ENCODE measurements at regions of chr13 and their contacts with region 1.

Region 1: DNA sequence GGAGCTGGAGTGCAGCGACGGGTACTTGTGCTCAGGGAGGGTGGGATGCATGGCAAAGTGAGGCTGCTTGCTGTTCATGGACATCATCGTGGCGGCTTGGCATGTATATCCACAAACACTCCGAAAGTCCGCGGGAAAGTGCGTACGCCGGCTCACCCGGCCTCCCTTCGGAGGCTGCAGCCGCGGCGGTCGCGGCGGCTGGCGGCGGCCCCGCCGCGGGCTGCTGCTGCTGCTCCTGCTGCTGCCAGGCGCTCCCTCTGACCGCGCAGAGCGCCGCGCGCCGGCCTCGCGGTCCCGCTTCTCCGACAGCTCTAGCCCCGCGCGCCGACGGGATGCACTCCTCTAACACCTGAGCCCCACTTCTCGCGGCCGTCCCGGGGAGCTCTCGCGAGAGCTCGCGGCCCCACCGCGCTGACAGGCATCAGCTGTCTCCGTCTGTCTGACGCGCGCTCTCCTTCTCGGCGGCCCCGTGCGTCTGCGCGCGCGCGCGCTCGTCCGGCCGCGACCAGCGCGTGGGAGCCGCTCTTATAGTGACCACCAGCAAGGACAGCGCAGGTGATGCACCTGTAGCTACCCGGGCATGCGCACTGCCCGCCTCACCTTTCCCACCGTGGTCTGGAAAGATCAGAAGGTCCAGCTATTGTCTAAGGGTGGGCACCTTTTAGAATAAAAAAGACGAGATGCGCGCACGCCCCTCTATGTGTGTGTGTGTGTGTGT is at the start of gene POU4F1:
- DNase-seq: peak; percentile 71
- H3K4me3 ChIP-seq: peak within 1 kb of the TSS; percentile 11 to 39 (median 33)
- H3K27ac ChIP-seq: no peak within 1 kb of the TSS
- H3K4me1 ChIP-seq: peaks cover 3% of the 10 kb centered on the region
- H3K27me3 ChIP-seq: peaks cover 73 to 90% of the 10 kb centered on the region in 2 experiments
- CTCF ChIP-seq: no peak
- POLR2A ChIP-seq: no peak
- total RNA-seq, gene POU4F1: 0.39 and 1.1 TPM in 2 replicates

Region 2: DNA sequence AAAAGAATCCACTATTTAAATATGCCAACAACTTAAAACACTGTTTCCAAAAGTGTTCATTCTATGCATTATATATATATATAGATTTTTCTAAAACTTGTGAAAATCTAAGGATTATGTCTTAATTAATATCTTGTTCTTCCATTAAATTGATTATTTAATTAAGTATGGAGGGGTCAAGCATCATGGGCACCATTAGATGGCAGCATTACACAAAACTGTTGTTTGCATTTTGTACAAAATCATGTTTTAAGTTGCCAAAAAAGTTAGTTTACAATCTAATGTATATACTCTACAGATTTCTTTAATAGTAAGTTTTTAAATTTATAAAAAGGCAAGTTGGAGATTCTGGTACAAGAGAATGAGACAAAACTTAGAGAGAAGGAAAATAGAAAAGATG is 471.6 kb before region 1 on chr13:
- CTCF ChIA-PET with region 1: no interaction called
- POLR2A ChIA-PET with region 1: no interaction called
- dilution Hi-C with region 1: no loop called
- intact Hi-C with region 1: loop called (anchors 5 kb)
- DNase-seq: peak; percentile 39
- H3K4me3 ChIP-seq: no peak overlapping the region
- H3K27ac ChIP-seq: no peak overlapping the region
- H3K4me1 ChIP-seq: no peaks in the 10 kb centered on the region
- H3K27me3 ChIP-seq: peaks cover 14% of the 10 kb centered on the region in 2 experiments
- CTCF ChIP-seq: peak; percentile 21 to 24
- POLR2A ChIP-seq: no peak

Region 3: DNA sequence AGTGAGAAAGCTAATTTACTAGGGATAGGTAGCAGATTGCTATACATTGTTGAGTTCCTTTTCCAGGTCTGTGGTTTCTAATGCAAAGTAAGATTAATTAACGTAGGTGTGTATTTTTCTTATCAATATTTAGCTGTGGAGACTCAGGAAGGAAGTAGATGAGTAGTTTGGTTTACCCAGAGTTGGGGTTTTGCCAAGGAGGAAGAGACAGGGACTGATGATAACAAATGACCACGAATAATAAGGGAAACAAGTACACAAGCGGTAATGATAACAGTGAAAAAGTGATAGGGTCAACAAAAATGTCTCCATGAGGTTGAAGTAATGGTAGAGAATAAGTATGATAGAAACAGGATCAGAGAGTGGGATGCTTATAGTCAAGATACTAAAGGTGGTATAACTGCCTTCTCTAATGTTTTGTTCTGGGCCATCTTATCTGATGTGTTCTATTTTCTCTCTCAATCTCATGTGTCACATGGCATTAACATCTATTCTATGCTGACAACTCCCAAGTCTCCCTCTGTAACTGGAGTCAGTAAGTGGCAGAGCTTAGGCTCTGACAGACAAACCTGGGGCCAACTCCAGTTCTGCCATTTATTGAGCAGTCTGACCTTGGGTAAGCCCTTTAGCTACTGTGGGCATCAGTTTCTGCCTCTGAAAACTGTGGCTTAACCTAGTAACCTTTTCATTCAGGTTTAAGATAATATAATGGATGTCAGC is 46.8 kb after region 1 on chr13:
- CTCF ChIA-PET with region 1: no interaction called
- POLR2A ChIA-PET with region 1: no interaction called
- dilution Hi-C with region 1: no loop called
- intact Hi-C with region 1: loop called (anchors 2 kb)
- DNase-seq: peak; percentile 69
- H3K4me3 ChIP-seq: no peak overlapping the region
- H3K27ac ChIP-seq: no peak overlapping the region
- H3K4me1 ChIP-seq: peaks cover 46% of the 10 kb centered on the region
- H3K27me3 ChIP-seq: no peaks in the 10 kb centered on the region
- CTCF ChIP-seq: no peak
- POLR2A ChIP-seq: no peak